Activated CD4-positive, alpha-beta T cell treated with anti-CD3 and anti-CD28 coated beads for 36 hours (primary cell): ENCODE measurements at regions of chr11 and their contacts with region 1.

Region 1: DNA sequence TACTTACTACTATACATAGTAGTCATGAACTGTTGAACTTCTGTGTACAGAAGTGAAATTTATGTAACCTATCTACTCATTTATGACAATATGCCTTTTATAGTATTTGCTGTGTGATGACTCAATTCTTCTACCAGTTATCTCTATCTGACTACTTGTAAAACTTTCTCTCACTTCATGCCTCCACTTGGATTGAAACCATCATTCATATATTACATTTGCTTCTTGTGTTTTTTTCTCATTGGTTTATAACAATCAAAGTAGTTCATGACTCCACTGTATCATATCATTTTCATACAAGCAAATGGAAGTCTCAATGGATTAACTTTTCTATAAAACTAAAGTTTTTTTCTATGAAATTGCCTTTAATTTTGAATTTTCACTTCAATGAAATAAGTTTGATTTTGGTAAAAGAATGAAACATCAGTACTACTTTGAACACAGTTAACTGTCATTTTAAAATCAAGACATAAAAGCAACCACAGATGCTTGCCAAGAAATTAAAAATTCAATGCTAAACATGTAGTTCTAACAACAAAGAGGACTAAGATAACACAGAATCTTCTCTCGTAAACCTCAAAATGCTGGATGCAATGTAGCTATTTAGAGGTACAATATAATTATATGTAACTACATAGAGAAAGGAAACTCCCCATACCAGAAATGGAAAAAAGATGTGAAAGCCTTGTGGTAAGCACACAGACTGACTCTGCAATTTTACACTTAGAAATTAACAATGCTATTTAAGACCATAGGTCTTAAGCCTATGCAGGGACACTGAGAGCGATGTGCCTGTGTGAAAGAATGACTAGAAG is 27.6 kb upstream of the EXPH5 start:
- DNase-seq: no peak
- ATAC-seq: peak; percentile 89
- H3K4me3 Mint-ChIP-seq: no peak overlapping the region
- H3K27ac Mint-ChIP-seq: no peak overlapping the region
- H3K4me1 Mint-ChIP-seq: peaks cover 23% of the 10 kb centered on the region
- H3K27me3 Mint-ChIP-seq: peaks cover 28% of the 10 kb centered on the region

Region 2: DNA sequence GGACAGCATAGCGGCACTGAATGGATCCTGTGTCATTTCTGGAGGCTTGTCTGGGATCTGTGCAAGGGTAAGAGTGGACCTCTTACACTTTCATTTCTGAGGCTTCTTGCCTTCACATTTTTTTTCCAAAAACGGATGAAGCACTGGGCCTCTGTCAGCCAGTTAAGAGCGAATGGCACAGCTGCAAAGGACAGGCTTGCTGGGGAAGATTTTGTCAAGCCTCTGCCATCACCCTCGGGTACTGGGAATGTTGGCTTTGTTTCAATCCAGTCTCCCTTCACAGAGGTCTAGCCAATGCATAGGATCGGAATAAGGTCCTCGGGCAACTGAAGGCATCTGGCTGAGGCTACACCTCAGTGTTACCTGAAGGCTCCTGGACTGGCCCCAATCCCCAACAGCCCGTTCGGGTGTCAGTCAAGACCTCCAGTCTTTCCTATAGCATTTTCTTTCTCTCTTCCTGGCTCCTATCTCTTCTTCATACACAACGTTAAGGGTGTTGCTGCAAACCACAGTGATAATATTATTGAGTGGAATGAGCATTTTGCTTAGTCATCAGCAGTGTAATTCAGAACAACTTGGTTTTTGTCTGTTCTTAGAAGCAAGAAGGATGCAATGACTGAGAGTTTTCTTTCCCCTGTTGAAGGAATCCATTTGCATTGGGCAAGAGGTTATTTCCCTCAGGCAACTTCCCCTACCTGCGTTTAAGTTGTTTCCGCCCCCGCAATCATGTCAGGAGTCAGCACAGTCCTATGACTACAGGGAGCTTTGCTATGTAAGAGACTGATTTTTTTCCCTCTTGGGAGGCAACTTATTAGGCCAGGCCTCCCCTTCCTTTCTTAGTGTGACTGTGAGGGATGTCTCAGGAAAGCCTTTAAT is 421.5 kb before region 1 on chr11:
- CTCF ChIA-PET with region 1: no interaction called
- POLR2A ChIA-PET with region 1: no interaction called
- intact Hi-C with region 1: loop called (anchors 1 to 2 kb)
- DNase-seq: peak; percentile 91
- ATAC-seq: peak; percentile 94
- H3K4me3 Mint-ChIP-seq: no peak overlapping the region
- H3K27ac Mint-ChIP-seq: peak overlapping the region; percentile 69
- H3K4me1 Mint-ChIP-seq: peaks cover 86% of the 10 kb centered on the region
- H3K27me3 Mint-ChIP-seq: no peaks in the 10 kb centered on the region

Region 3: GRCh38 chr11:108237058-108237481 is 384.1 kb before region 1 on chr11:
- CTCF ChIA-PET with region 1: no interaction called
- POLR2A ChIA-PET with region 1: no interaction called
- intact Hi-C with region 1: loop called in 1 of 2 experiments (anchors 1 kb)
- DNase-seq: no peak
- ATAC-seq: peak; percentile 47
- H3K4me3 Mint-ChIP-seq: peak overlapping the region; percentile 57
- H3K27ac Mint-ChIP-seq: peak overlapping the region; percentile 83
- H3K4me1 Mint-ChIP-seq: peaks cover 77% of the 10 kb centered on the region
- H3K27me3 Mint-ChIP-seq: no peaks in the 10 kb centered on the region

Region 4: DNA sequence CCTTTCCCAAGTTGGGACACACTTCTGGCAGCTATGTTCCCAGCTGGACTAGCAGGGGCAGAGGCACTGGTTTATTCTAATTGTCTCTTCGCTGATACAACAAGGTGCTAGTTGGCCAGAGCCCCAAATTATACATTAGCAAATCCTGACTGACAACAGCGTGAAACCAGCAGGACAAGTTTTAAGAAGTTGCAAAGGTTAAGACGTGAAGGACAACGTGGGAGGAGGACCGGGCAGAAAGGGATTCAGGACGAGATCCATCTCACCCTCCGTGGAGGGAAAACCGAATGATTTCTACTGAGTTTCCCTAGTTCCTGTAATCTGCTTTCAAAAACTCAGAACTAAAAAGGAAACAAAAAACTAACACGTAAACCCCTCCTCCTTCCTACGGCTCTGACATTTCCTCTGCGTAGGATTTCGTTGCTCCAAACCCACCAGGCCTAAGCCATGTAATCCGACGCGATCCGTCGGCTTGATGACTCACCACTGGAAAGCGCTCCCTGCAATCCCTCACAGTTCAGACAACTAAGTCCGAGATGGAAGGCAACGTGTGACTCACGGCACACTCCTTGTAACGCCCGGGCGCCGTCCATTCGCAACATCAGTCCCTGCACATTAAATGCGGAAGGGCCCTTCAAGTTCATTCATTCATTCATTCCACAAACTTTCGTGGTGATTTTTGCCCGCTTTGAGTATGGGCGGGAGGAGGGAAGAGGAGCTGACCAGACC is 123.7 kb before region 1 on chr11:
- CTCF ChIA-PET with region 1: no interaction called
- POLR2A ChIA-PET with region 1: no interaction called
- intact Hi-C with region 1: loop called in 1 of 2 experiments (anchors 1 kb)
- DNase-seq: peak; percentile 85
- ATAC-seq: peak; percentile 91
- H3K4me3 Mint-ChIP-seq: peak overlapping the region; percentile 81
- H3K27ac Mint-ChIP-seq: peak overlapping the region; percentile 91
- H3K4me1 Mint-ChIP-seq: peaks cover 17% of the 10 kb centered on the region
- H3K27me3 Mint-ChIP-seq: no peaks in the 10 kb centered on the region

Region 5: DNA sequence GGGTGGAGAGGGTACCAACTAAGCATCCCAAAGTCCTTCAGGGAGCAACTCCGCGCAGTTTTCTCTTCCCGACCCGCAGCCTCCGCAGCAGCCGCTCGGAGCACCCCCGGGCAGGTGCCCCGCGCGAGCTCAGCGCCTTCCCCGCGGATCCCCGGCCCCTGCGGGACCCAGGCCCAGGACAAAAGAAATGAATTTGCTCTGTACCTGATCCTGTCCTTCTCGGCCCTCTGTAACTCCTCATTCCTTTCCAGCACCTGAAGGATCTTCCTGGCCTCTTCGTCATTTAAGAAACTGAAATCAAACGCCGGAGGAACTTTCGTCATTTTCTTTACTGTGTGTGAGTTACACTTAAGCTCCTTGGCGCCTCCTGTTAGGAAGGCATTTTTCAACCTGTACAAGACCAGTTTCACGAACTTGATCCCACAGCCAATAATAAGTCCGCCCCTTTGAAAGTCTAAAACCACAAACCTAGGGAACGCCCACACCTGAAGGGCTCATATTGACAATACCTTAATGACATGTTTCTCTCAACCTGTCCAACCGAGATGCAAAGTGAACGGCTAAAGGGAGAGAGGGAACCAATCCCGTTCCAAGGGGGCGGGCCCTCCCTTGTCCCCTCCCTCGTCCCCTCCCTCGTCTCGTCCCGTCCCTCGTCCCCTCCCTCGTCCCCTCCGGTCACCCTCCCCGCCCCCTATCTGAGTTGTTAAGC is 27.8 kb before region 1 on chr11 and contains the start of gene EXPH5:
- CTCF ChIA-PET with region 1: no interaction called
- POLR2A ChIA-PET with region 1: no interaction called
- intact Hi-C with region 1: loop called in 1 of 2 experiments (anchors 1 kb)
- DNase-seq: peak; percentile 92
- ATAC-seq: peak; percentile 99
- H3K4me3 Mint-ChIP-seq: peak within 1 kb of the TSS; percentile 94
- H3K27ac Mint-ChIP-seq: peak within 1 kb of the TSS; percentile 98
- H3K4me1 Mint-ChIP-seq: peaks cover 15% of the 10 kb centered on the region
- H3K27me3 Mint-ChIP-seq: peaks cover 21% of the 10 kb centered on the region
- total RNA-seq, gene EXPH5: 2.0 to 2.4 TPM

Region 6: DNA sequence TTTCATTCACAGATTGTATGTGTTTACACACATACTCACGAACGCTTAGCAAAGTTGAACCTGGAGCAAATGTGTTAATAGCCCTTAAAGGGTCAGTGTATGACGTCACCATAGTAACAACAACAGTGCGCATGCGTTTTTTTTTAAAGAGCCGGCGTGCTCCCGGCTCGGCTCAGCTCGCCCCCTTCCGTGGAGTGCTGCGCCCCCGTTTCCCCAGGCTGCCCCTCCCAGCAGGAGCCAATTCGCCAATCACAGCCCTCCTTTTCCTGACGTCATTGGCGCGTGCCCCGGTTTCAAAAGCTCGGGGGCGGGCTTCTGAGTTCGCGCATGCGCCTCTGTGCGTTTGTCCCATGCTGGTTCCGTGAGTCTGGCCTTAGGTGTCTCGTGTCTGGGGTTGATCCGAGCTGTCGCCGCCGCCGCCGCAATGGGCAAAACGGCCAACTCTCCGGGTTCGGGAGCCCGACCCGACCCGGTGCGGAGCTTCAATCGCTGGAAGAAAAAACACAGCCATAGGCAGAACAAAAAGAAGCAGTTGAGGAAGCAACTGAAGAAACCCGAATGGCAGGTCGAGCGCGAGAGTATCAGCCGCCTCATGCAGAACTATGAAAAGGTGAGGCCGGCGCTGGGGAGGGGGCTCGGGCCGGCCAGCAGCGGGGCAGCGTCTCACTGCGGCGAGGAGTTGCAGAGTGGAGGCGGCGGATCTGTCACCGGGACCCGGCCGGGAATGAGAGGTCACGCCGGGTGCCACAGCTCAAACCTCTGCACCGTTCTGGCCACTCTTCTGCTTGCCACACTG is 43.8 kb after region 1 on chr11 and contains the start of gene DDX10:
- CTCF ChIA-PET with region 1: no interaction called
- POLR2A ChIA-PET with region 1: no interaction called
- intact Hi-C with region 1: loop called in 1 of 2 experiments (anchors 2 kb)
- DNase-seq: peak; percentile 99
- ATAC-seq: peak; percentile 99
- H3K4me3 Mint-ChIP-seq: peak within 1 kb of the TSS; percentile 99
- H3K27ac Mint-ChIP-seq: peak within 1 kb of the TSS; percentile 91
- H3K4me1 Mint-ChIP-seq: peaks cover 37% of the 10 kb centered on the region
- H3K27me3 Mint-ChIP-seq: no peaks in the 10 kb centered on the region
- total RNA-seq, gene DDX10: 45.8 to 50.9 TPM

Region 7: DNA sequence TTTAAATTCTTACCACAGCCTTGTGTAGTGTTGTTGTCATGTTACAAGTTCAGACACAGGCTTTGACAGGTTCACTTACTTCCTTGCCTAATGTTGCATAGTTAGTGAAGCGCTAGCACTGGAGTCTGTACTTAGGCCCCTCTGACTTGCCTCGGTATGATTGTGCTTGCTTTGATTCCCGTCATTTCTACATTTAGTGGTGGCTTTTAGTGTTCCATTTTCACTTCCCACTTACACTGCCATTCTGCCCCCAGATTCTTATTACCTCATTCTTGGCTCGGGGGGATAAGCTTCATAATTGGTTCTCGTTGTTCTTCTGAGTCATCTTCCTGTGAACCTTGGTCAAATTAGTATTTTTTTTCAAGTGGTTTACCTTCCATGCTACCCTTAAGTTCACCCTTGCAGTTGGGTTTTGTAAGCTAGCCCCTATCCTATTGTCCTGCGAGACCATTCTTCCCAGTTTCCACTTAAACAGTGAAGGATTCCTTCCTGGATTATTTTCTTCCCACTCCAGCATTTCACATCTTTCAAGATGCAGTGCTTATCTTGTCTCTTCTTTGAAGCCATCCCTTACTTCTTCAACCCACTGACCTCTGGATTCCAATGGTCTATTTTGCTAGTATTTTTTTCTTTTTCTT is 112.4 kb after region 1 on chr11:
- CTCF ChIA-PET with region 1: no interaction called
- POLR2A ChIA-PET with region 1: no interaction called
- intact Hi-C with region 1: loop called (anchors 2 kb)
- DNase-seq: peak; percentile 65
- ATAC-seq: peak; percentile 99
- H3K4me3 Mint-ChIP-seq: no peak overlapping the region
- H3K27ac Mint-ChIP-seq: peak overlapping the region; percentile 81
- H3K4me1 Mint-ChIP-seq: peaks cover 56% of the 10 kb centered on the region
- H3K27me3 Mint-ChIP-seq: no peaks in the 10 kb centered on the region